Panc1 (cell line): ENCODE measurements at regions of chr19 and their contacts with region 1.

Region 1: GRCh38 chr19:45323671-45324081 is 1.0 kb upstream of the CKM start:
- DNase-seq: no peak
- ATAC-seq: peak; percentile 24; the same call in 1 of the 2 replicates
- H3K4me3 ChIP-seq: 0 out of 4 replicates have a peak overlapping the region, but pooled peaks of 1 of the 2 experiments have one; percentile 0
- H3K27ac ChIP-seq: no peak overlapping the region
- H3K4me1 ChIP-seq: peaks cover 10% of the 10 kb centered on the region
- H3K27me3 ChIP-seq: no peaks in the 10 kb centered on the region
- CTCF ChIP-seq: no peak

Region 2: DNA sequence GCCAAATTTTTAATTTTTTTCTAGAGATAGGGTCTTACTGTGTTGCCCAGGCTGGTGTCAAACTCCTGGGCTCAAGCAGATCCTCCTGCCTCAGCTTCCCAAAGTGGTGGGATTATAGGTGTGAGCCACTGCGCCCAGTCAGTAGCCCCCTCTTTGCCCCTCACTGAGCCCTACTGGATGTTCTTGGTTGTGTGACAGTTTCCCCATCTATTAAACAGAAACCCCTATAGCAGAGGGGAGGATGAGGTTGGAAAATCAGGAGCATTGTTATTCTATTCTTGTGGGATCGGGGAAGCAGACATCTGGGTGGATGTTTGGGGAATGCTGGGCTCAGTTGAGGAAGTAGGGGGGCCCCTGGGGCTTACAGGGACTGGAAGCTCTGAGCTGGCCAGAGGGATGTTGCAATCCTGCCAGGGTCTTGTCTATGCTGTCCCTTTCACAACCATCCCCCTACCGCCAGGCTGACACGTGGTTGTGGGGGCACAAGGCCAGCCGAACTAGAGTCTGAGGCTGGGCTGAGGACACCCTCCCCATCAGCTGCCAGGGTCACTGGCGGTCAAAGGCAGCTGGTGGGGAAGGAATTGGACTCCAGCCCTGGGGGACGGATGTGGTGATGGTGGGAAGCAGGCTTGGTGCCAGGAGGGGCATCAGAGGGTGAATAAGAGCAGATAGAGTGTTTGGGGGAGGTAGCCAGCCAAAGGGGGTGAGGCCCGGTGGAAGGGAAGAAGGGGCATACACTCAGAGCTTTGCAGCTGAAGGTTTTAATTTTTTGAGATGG is 398.4 kb before region 1 on chr19:
- CTCF ChIA-PET with region 1: no interaction called
- POLR2A ChIA-PET with region 1: no interaction called
- in situ Hi-C with region 1: no loop called
- intact Hi-C with region 1: no loop called
- DNase-seq: no peak
- ATAC-seq: no peak
- H3K4me3 ChIP-seq: no peak overlapping the region
- H3K27ac ChIP-seq: no peak overlapping the region
- H3K4me1 ChIP-seq: no peaks in the 10 kb centered on the region; the same call in 1 of the 2 replicates
- H3K27me3 ChIP-seq: no peaks in the 10 kb centered on the region
- CTCF ChIP-seq: no peak

Region 3: DNA sequence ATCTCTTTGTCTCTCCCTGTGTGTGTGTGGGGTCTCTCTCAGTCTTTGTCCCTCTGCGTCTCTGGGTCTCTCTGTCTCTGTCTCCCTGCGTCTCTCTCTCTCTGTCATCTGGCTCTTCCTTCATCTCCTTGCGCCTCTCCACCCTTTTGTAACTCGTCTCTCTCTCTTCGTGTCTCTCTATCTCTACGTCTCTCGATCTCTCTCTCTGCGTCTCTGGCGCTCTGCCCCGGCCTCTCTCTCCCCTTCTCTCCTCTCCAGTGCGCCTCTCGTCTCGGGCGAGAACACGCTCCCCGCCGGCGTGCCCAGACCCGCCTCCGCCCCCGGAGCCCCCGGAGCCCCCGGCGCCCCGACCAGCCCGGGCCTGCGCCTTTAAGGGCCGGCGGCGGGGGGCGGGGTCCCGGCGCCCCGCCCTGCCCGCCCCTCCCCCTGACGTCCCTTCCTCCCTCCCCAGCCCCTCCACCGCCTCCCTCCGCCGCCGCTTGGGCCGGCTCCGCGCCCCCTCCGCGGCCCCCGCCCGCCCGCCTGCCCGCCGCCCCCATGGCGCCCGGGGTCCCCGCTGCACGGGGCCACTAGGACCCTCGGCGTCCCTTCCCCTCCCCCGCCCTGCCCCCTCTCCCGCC is 72.7 kb before region 1 on chr19 and contains the start of gene MARK4:
- CTCF ChIA-PET with region 1: interaction called, 4 read pairs
- POLR2A ChIA-PET with region 1: no interaction called
- in situ Hi-C with region 1: no loop called
- intact Hi-C with region 1: loop called (anchors 10 kb)
- DNase-seq: no peak
- ATAC-seq: peak; percentile 76
- H3K4me3 ChIP-seq: peak within 1 kb of the TSS; percentile 63 to 67
- H3K27ac ChIP-seq: peak within 1 kb of the TSS; percentile 68
- H3K4me1 ChIP-seq: no peaks in the 10 kb centered on the region; the same call in 1 of the 2 replicates
- H3K27me3 ChIP-seq: no peaks in the 10 kb centered on the region
- CTCF ChIP-seq: no peak
- total RNA-seq, gene MARK4: 21.6 TPM